Ascending aorta (tissue), 2 donors: ENCODE measurements at regions of chr4 and their contacts with region 1.

Region 1: GRCh38 chr4:24794916-24795665 is at the start of gene SOD3:
- DNase-seq: peak; percentile 66 to 96
- H3K4me3 ChIP-seq: peak within 1 kb of the TSS; percentile 48 to 59
- H3K27ac ChIP-seq: peak within 1 kb of the TSS; percentile 95 to 97
- H3K4me1 ChIP-seq: peaks cover 0 to 25% of the 10 kb centered on the region in 2 donors
- H3K27me3 ChIP-seq: no peaks in the 10 kb centered on the region
- CTCF ChIP-seq: no peak
- total RNA-seq, gene SOD3: 893 TPM

Region 2: GRCh38 chr4:24686871-24687680 is 108.0 kb before region 1 on chr4:
- intact Hi-C with region 1: loop called (anchors 5 kb)
- DNase-seq: no peak
- H3K4me3 ChIP-seq: no peak overlapping the region
- H3K27ac ChIP-seq: no peak overlapping the region
- H3K4me1 ChIP-seq: no peaks in the 10 kb centered on the region
- H3K27me3 ChIP-seq: no peaks in the 10 kb centered on the region
- CTCF ChIP-seq: peak in 1 of 3 experiments; percentile 29

Region 3: DNA sequence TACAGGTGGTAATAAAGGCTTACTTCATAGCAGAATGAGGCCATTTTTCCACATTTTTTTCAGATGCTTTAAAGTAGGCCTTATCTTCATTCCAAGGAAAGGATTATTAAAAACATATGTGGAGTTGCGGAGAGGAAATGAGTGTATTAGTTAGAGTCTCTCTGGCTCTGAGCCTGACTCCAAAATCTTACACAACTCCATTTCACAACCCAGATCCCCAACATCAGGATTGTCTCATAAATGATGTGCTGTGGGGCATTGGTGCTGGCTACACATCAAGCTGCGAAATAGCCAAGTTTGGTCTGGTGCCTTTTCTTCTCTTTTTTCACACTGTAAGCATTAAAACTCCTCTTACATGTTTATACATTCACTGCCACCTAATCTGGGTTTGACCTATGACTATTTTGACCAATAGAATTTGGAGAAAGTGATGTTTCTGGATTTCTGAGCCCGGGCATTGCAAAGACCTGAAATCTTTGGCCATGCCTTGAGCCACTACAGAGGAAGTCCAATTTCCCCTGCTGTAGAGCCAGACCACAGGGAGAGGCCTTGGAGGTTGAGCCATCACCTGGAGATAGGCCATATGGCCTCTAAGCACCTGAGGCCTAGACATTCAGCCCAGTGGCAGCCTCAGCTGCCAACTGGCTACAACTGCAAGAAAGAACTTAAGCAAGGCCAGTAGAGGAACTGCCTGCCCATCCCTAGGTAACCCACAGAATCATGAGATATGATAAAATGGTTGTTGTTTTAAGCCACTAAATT is 16.4 kb before region 1 on chr4:
- intact Hi-C with region 1: loop called (anchors 1 kb)
- DNase-seq: peak in 1 of 2 donors; percentile 92
- H3K4me3 ChIP-seq: no peak overlapping the region
- H3K27ac ChIP-seq: peak overlapping the region; percentile 77 to 88
- H3K4me1 ChIP-seq: peaks cover 9 to 53% of the 10 kb centered on the region in 2 donors
- H3K27me3 ChIP-seq: no peaks in the 10 kb centered on the region
- CTCF ChIP-seq: no peak

Region 4: DNA sequence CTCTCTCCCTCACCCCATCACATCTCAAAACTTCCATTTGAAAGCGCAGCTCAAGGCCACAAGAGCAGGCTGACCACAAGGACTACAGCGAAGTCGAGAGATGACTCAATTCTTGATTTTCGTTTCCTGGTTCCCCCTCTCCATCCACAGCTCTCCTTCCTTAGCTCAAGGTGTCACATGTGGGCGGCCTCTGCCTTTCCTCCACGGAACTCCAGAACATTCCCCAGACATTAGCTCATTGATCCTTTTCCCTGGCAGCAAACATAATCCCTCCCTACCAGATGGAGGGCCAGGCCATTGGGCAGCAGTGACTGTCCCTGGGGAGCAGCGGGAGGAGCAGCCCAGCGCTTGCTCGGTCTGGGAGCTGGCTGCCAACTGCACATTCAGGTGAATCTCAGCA is 61.5 kb after region 1 on chr4:
- intact Hi-C with region 1: loop called (anchors 1 kb)
- DNase-seq: peak in 1 of 2 donors; percentile 90
- H3K4me3 ChIP-seq: no peak overlapping the region
- H3K27ac ChIP-seq: peak overlapping the region; percentile 72 to 73
- H3K4me1 ChIP-seq: peaks cover 14 to 47% of the 10 kb centered on the region in 2 donors
- H3K27me3 ChIP-seq: no peaks in the 10 kb centered on the region
- CTCF ChIP-seq: no peak

Region 5: DNA sequence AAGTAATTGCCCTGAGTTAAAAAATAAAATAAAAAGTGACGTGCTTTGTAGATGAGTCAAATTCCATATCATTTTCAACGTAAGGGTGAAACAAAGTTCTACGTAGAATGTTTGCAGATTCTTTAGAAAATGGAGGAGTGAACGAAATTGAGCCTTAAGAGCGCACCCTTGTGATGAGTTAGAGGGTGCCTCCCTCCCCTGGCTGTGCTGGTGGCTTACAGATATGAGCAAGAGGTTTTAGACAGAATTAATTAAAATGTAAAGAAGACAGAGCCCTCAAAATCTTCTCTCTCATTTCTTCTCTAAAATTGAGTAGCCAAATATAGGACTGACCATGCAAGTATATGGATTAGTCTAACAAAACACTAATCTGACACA is 265.9 kb after region 1 on chr4:
- intact Hi-C with region 1: loop called (anchors 5 kb)
- DNase-seq: peak in 1 of 2 donors; percentile 58
- H3K4me3 ChIP-seq: no peak overlapping the region
- H3K27ac ChIP-seq: peak overlapping the region; percentile 77
- H3K4me1 ChIP-seq: peaks cover 0 to 7% of the 10 kb centered on the region in 2 donors
- H3K27me3 ChIP-seq: no peaks in the 10 kb centered on the region
- CTCF ChIP-seq: no peak